Lower leg skin (tissue), 4 donors: ENCODE measurements at regions of chr12 and their contacts with region 1.

Region 1: DNA sequence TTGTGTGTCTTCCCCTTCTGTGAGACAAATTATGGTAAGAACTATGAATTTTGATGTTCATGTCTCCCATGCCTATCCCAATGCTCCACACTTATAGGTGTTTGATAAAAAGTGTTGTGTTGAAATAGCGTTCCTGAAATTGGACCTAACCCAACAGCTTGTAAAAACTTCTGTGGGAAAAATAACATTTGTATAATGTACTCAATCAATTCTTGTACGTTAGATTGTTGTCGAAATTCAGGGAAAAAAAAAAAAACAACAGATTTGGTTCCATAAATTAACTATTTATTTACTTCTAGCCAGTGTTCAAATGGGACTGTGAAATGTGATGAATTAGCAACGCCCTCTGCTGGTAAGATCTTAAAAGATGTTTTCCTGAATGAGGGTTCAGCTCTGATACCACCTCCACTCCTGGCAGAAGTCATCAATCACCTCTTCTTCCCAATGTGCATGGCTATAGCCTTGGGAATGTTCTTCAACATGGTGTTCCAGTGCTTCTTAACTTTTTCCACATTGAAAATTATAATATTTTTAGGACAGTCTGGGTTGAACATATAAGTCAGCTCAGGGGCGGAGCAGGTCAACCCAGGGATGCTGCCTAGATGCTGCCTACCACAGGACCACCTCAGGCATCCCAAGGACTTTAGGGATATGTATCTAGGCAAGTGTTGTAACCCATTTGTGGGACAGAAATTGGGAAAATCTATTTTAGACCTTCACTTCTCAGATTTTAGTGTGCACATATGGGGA is 170.6 kb downstream of the OTOGL start:
- DNase-seq: no peak
- H3K4me3 ChIP-seq: no peak overlapping the region
- CTCF ChIP-seq: no peak
- POLR2A ChIP-seq: no peak

Region 2: DNA sequence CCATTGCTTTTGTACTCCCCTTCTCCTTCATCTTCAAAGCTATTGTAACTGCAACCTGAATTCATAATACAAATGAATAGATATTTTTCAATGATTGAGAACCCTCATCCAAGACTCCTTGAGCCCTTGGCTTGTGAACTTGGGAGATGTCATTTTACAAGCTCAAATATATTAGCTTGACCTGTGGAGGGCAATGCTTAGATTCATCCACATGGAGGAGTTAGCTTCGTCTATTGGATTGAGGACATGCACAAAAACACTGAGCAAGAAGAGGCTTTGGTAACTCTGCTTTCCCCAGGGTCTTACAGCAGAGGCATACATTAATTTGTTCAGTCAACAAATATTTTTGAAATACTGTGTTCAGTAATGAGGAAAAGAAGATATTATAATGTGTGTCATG is 69.6 kb before region 1 on chr12:
- intact Hi-C with region 1: loop called (anchors 10 kb)
- DNase-seq: no peak
- H3K4me3 ChIP-seq: no peak overlapping the region
- CTCF ChIP-seq: no peak
- POLR2A ChIP-seq: no peak